ENCODE measurements at regions of chr17 and their contacts with region 1.

Region 1: DNA sequence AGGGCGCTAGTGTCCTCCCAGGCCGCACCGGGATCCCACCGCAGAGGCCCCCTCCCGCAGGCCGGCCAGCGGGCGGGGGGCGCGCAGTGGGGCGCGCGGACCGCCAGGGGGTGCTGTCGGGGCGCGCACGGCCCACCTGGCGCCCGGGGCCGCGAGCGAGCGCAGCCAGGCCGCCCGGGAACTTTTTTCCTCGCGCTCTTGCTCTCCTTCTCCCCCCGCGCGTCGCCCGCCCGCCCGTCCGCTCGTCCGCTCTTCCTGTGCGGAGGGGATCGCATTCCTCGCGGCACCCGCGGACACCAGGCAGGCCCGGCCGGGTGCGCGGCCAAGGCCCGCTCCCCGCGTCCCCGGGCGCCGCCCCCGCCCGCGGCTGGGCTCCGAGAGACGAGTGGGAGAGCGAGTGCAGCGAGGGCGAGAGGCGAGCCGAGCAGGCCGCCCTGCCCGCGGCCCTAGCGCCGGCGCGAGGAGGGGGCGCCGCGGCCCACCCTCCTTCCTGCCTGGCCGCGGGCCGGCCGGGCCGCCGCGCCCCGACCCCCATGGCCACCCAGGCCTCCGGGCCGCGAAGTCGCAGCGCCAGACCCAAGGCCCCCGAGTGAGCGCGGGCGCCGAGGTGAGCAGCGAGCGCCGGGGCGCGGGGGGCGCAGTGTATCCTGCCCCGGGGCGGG is at the start of gene RAI1:
- DNase-seq: peak in 1 of 2 donors; percentile 82
- H3K4me3 ChIP-seq: peak within 1 kb of the TSS; percentile 72 to 93
- H3K27ac ChIP-seq: peak within 1 kb of the TSS; percentile 86 to 91
- H3K4me1 ChIP-seq: peaks cover 0 to 24% of the 10 kb centered on the region in 2 donors
- H3K27me3 ChIP-seq: no peaks in the 10 kb centered on the region
- CTCF ChIP-seq: peak in 2 of 3 experiments; percentile 48 to 97
- total RNA-seq, gene RAI1: 24.7 TPM

Region 2: GRCh38 chr17:17694169-17695081 is 13.1 kb after region 1 on chr17:
- intact Hi-C with region 1: loop called (anchors 1 kb)
- DNase-seq: peak; percentile 48 to 88
- H3K4me3 ChIP-seq: peak overlapping the region; percentile 71 to 78
- H3K27ac ChIP-seq: peak overlapping the region; percentile 98 to 99
- H3K4me1 ChIP-seq: peaks cover 6 to 51% of the 10 kb centered on the region in 2 donors
- H3K27me3 ChIP-seq: no peaks in the 10 kb centered on the region
- CTCF ChIP-seq: no peak

Region 3: GRCh38 chr17:17752089-17752820 is 70.9 kb after region 1 on chr17:
- intact Hi-C with region 1: loop called (anchors 1 kb)
- DNase-seq: peak; percentile 94 to 98
- H3K4me3 ChIP-seq: peak overlapping the region; percentile 40 to 61
- H3K27ac ChIP-seq: peak overlapping the region; percentile 56 to 77
- H3K4me1 ChIP-seq: peaks cover 7 to 22% of the 10 kb centered on the region in 2 donors
- H3K27me3 ChIP-seq: no peaks in the 10 kb centered on the region
- CTCF ChIP-seq: peak; percentile 4 to 42 (median 33)

Region 4: GRCh38 chr17:17812211-17813057 is 131.1 kb after region 1 on chr17:
- intact Hi-C with region 1: loop called (anchors 1 kb)
- DNase-seq: peak in 1 of 2 donors; percentile 85
- H3K4me3 ChIP-seq: no peak overlapping the region
- H3K27ac ChIP-seq: no peak overlapping the region
- H3K4me1 ChIP-seq: peaks cover 0 to 2% of the 10 kb centered on the region in 2 donors
- H3K27me3 ChIP-seq: no peaks in the 10 kb centered on the region
- CTCF ChIP-seq: peak; percentile 97 to 100 (median 100)

Region 5: DNA sequence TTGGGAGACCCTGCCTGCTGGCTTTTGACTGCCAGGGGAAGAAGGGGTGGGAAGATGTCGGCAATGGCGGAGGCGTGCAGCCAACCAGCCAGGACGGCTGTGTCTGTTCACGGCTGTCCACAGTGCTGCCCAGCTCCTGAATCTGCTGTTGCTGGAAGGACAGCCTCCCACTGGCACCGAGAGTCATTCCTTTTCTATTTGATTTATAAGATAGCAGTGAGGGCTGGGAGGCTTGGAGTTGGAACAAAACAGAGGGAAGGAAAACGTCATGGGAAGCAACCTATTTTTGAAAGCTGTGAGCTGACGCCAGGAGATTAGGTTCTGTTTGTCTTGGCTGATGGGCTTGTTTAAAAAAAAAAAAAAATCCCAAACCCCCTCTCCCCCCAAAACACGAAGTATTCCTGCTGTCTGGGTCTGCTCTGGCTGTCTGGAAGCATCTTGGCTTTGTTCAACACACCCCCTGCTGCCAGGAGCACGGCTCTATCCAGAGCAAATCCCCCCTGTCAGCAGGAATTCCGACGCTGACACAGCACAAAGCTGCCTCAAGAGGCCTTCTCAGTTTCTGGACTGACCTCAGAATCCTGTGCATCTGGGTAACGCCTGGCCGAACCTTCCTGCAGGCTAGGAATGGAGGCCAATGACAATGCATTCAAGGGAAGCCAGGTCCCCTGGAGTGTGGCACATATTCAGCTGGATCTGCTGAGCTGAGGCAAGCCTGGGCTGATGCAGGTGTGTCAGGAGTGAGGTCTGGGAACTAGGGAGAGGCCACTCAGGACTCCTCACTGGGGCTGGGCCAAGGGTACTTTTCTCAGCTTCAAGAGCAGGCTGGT is 196.4 kb after region 1 on chr17:
- intact Hi-C with region 1: loop called (anchors 5 kb)
- DNase-seq: peak; percentile 38 to 92
- H3K4me3 ChIP-seq: peak overlapping the region in 1 of 2 donors; percentile 37
- H3K27ac ChIP-seq: peak overlapping the region; percentile 87 to 89
- H3K4me1 ChIP-seq: peaks cover 9 to 25% of the 10 kb centered on the region in 2 donors
- H3K27me3 ChIP-seq: no peaks in the 10 kb centered on the region
- CTCF ChIP-seq: no peak

Region 6: DNA sequence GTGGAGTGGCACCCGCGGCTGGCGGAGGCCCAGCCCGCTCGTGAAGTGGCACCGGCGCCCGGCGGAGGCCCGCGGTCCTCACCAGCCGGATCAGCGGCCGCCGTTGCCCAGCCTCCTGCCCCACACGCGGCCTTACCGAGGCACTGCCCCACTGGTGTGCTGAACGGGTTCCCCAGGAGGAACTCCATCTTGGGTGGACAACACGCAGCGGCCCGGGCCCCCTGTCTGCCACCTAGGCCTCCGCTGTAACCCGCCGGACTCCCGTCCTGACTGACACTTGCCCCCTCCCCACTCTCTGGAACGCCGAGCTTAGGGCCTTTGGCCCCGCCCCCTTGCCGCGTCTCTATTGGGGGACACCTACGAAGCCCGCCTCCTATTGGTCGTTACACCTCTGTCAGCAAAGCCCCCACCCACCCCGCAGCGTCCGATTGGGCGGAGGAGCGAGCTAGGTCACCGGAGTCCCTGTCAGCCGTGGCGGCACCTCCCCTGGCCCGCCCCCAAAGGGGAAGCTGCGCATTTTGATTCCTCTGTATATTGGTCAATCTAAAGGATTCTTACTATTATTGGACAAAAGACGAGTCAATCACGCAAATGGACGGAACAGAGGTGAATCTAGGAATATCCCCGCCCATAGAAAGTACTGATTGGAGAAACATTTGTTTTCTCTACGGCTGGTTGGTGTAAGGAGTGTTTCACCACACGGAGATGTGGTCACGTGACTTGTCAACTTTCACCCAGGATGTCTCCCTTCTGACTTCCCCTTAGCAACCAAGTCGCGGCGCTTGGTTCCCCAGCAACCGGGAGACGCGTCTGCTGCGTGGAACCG is 291.0 kb after region 1 on chr17 and contains the starts of genes DRC3 and TOM1L2:
- intact Hi-C with region 1: loop called (anchors 5 kb)
- DNase-seq: peak; percentile 100
- H3K4me3 ChIP-seq: peak within 1 kb of the TSS; percentile 56 to 69
- H3K27ac ChIP-seq: peak within 1 kb of the TSS; percentile 86 to 87
- H3K4me1 ChIP-seq: peaks cover 6 to 17% of the 10 kb centered on the region in 2 donors
- H3K27me3 ChIP-seq: no peaks in the 10 kb centered on the region
- CTCF ChIP-seq: peak in 1 of 3 experiments; percentile 7
- total RNA-seq, gene DRC3: 7.2 TPM
- total RNA-seq, gene TOM1L2: 39.0 TPM